Sigmoid colon (tissue), 7 donors: ENCODE measurements at regions of chr11 and their contacts with region 1.

Region 1: GRCh38 chr11:11407065-11407762 is 54.2 kb upstream of the CSNK2A3 start:
- DNase-seq: peak; percentile 80
- H3K4me3 ChIP-seq: no peak overlapping the region
- H3K27ac ChIP-seq: peak overlapping the region; percentile 71 to 94 (median 80)
- H3K4me1 ChIP-seq: peaks cover 0 to 84% (median 74%) of the 10 kb centered on the region in 4 donors
- H3K27me3 ChIP-seq: no peaks in the 10 kb centered on the region
- CTCF ChIP-seq: peak; percentile 11 to 56 (median 32)
- EP300 ChIP-seq: peak in 3 of 4 donors; percentile 77 to 97 (median 84)
- POLR2A ChIP-seq: no peak

Region 2: GRCh38 chr11:11463405-11463804 is 56.2 kb after region 1 on chr11:
- intact Hi-C with region 1: loop called (anchors 5 kb)
- DNase-seq: no peak
- H3K4me3 ChIP-seq: no peak overlapping the region
- H3K27ac ChIP-seq: peak overlapping the region in 3 of 4 donors; percentile 62 to 81 (median 70)
- H3K4me1 ChIP-seq: peaks cover 0 to 71% (median 42%) of the 10 kb centered on the region in 4 donors
- H3K27me3 ChIP-seq: no peaks in the 10 kb centered on the region
- CTCF ChIP-seq: no peak
- EP300 ChIP-seq: no peak
- POLR2A ChIP-seq: no peak

Region 3: GRCh38 chr11:11569936-11570491 is 162.8 kb after region 1 on chr11:
- intact Hi-C with region 1: loop called (anchors 5 kb)
- DNase-seq: peak; percentile 81
- H3K4me3 ChIP-seq: no peak overlapping the region
- H3K27ac ChIP-seq: peak overlapping the region; percentile 58 to 88 (median 71)
- H3K4me1 ChIP-seq: peaks cover 0 to 90% (median 63%) of the 10 kb centered on the region in 4 donors
- H3K27me3 ChIP-seq: no peaks in the 10 kb centered on the region
- CTCF ChIP-seq: no peak
- EP300 ChIP-seq: no peak
- POLR2A ChIP-seq: no peak

Region 4: DNA sequence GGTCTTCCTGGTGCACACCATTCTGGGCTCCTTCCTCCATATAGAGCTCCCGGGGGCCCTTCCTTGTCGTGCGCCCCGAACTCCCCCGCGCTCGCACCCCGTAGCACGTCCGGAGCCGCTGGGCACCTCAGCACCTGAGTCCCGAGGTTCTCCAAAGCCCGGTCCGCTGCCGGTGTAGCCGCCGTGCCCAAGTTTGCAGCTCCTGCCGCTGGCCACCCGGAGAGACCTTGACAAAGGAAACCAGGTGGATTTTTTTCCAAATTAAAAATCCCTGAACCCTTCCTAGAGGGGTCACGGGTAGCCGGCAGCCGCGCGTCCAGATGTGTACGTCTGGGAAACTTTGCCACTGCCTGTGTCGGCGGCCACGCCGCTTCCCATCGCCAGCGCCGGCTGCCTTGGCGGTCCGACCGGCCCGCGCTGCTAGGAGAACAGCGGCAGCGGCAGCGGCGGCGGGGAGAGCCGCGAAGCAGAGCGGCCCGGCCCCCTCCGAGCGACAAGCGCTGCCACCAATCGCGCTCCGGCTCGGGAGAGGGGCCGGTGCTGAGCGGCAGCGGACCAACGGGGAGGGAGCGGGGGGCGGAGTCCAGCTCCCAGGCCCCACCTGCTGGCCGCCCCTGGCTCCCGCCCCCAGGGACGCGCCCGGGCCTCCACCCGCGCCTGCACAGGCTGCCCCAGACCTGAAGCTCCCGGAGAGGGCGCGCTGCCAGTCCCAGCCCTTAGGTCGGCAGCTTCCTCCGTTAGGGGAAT is 214.5 kb after region 1 on chr11 and contains the start of gene GALNT18:
- intact Hi-C with region 1: loop called (anchors 2 kb)
- DNase-seq: peak; percentile 97
- H3K4me3 ChIP-seq: peak within 1 kb of the TSS; percentile 64 to 85 (median 77)
- H3K27ac ChIP-seq: peak within 1 kb of the TSS; percentile 85 to 93 (median 88)
- H3K4me1 ChIP-seq: peaks cover 0 to 54% (median 49%) of the 10 kb centered on the region in 4 donors
- H3K27me3 ChIP-seq: no peaks in the 10 kb centered on the region
- CTCF ChIP-seq: peak in 2 of 4 experiments; percentile 50 to 54
- EP300 ChIP-seq: no peak
- POLR2A ChIP-seq: peak in 1 of 2 donors; percentile 73
- total RNA-seq, gene GALNT18: 34.9 to 48.6 (median 39.8) TPM

Region 5: DNA sequence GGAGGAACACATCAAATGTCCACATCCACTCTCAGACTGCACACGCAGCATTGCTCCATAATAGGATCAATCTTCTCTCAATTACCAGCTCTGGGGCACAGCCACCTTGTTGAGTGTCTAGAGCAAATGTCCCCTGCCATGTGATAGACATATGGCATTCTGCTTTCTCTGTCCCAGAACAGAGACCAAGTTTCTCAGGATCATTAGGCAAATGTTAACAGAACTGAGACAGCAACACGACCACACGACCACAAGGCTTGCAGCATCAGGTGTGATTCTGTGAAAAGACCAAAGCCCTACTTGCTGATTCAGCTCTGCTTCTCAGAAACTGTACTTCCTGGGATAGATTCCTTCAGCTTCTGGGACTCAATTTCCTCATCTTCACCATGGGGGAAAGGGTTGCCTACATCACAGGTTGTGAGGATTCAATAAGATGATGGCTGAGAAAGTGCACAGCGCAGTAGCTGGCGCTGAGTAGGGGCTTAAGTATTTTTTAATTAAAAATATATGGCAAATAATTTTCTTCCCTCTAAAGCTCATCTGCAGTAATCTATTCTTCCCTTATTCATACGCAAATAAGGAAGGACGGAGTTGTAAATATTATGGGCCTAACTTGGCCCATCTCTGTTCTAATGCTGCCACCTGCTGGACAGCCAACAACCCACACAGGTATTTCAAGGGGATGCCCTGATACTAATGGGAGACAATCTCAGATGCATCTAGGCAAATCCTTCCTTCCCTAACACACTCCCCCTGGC is 380.3 kb after region 1 on chr11:
- intact Hi-C with region 1: loop called (anchors 5 kb)
- DNase-seq: peak; percentile 85
- H3K4me3 ChIP-seq: no peak overlapping the region
- H3K27ac ChIP-seq: peak overlapping the region in 1 of 4 donors; percentile 9
- H3K4me1 ChIP-seq: peaks cover 0 to 3% (median 0%) of the 10 kb centered on the region in 4 donors
- H3K27me3 ChIP-seq: no peaks in the 10 kb centered on the region
- CTCF ChIP-seq: peak; percentile 87 to 92 (median 88)
- EP300 ChIP-seq: no peak
- POLR2A ChIP-seq: no peak

Region 6: DNA sequence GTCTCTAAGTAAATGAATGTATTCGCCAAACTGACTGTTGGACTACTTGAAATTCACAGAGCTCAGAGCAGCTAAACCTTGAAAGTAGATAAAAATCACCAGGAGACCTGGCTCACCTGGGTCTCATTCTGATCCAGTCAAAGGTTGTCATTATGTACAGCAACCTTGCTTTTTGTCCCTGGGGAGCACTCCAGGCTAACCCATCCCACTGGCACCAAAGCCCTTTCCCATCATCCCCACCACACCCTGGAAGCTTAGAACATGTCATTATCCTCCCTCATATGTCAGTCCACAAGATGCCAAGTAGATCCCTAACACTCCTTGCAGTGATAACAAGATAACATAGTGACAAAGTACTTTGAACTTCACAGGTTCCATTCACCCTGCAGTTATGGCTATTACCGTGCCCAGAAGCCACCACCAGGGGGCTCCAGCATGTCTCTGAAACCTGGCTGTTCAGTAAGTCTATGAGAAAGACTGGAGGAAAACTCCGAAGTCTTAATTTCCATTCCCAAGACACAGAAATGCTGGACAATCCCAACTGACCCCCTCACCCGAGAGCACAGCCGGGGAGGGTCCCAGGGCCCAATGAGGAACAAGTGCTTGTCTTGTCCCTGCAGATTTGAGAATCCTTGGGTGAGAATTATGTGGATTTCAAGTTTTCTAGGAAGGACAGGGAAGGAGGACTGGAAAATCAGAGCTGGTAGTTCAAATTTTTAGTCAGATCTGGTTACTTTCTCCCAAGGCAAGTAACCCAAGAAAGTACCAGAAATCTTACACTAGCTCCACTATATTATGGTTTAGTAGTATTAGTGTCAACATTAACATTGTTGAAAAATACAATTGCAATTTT is 391.6 kb after region 1 on chr11:
- intact Hi-C with region 1: no loop called
- DNase-seq: peak; percentile 92
- H3K4me3 ChIP-seq: no peak overlapping the region
- H3K27ac ChIP-seq: no peak overlapping the region
- H3K4me1 ChIP-seq: no peaks in the 10 kb centered on the region
- H3K27me3 ChIP-seq: no peaks in the 10 kb centered on the region
- CTCF ChIP-seq: peak; percentile 61 to 89 (median 84)
- EP300 ChIP-seq: no peak
- POLR2A ChIP-seq: no peak